ENCODE measurements at regions of chr3 and their contacts with region 1.

Region 1: DNA sequence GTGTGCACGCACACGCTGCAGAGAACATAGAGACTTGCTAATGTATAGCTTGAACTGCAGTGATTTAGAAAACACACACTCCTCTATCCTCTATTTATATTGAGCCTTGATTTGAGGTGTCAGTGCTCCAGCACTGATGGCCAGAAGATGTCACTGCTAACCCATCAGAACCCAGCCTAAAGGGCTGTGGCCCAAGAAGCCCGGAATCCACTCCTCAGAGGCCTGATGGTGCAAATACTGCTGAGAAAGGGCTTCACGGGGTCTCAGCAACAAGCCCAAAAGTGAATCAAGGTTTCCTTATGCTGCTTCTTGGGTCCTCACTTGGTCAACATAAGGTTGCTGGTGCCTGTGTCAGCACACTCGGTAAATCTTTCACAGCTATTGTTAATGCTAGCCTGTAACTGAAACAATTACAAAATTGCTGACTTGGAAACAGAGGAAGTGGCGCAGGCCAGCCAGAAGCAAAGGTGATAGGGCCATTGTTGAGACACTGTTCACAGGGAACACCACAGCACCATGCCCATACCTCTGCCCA is 60.3 kb downstream of the HEG1 start:
- DNase-seq: peak; percentile 69
- ATAC-seq: peak; percentile 89
- H3K4me3 Mint-ChIP-seq: no peak overlapping the region
- H3K27ac Mint-ChIP-seq: no peak overlapping the region
- H3K4me1 Mint-ChIP-seq: peaks cover 45% of the 10 kb centered on the region
- H3K27me3 Mint-ChIP-seq: no peaks in the 10 kb centered on the region
- CTCF ChIP-seq: peak; percentile 18; the same call in 1 of the 2 replicates

Region 2: GRCh38 chr3:124700880-124701684 is 294.4 kb before region 1 on chr3:
- CTCF ChIA-PET with region 1: no interaction called
- POLR2A ChIA-PET with region 1: no interaction called
- DNase-seq: peak; percentile 18
- ATAC-seq: peak; percentile 92
- H3K4me3 Mint-ChIP-seq: no peak overlapping the region
- H3K27ac Mint-ChIP-seq: peak overlapping the region; percentile 33; the same call in 1 of the 2 replicates
- H3K4me1 Mint-ChIP-seq: peaks cover 13% of the 10 kb centered on the region
- H3K27me3 Mint-ChIP-seq: no peaks in the 10 kb centered on the region; the same call in 1 of the 2 replicates
- CTCF ChIP-seq: no peak

Region 3: GRCh38 chr3:124962403-124962940 is 33.1 kb before region 1 on chr3:
- CTCF ChIA-PET with region 1: no interaction called
- POLR2A ChIA-PET with region 1: no interaction called
- DNase-seq: no peak
- ATAC-seq: no peak
- H3K4me3 Mint-ChIP-seq: no peak overlapping the region
- H3K27ac Mint-ChIP-seq: no peak overlapping the region
- H3K4me1 Mint-ChIP-seq: peaks cover 6% of the 10 kb centered on the region; the same call in 1 of the 2 replicates
- H3K27me3 Mint-ChIP-seq: no peaks in the 10 kb centered on the region
- CTCF ChIP-seq: no peak

Region 4: GRCh38 chr3:124976383-124976782 is 19.1 kb before region 1 on chr3:
- CTCF ChIA-PET with region 1: no interaction called
- POLR2A ChIA-PET with region 1: no interaction called
- DNase-seq: no peak
- ATAC-seq: no peak
- H3K4me3 Mint-ChIP-seq: no peak overlapping the region
- H3K27ac Mint-ChIP-seq: no peak overlapping the region
- H3K4me1 Mint-ChIP-seq: no peaks in the 10 kb centered on the region
- H3K27me3 Mint-ChIP-seq: no peaks in the 10 kb centered on the region
- CTCF ChIP-seq: no peak

Region 5: GRCh38 chr3:125087768-125088391 is 92.4 kb after region 1 on chr3:
- CTCF ChIA-PET with region 1: no interaction called
- POLR2A ChIA-PET with region 1: no interaction called
- DNase-seq: no peak
- ATAC-seq: no peak
- H3K4me3 Mint-ChIP-seq: no peak overlapping the region
- H3K27ac Mint-ChIP-seq: no peak overlapping the region
- H3K4me1 Mint-ChIP-seq: no peaks in the 10 kb centered on the region
- H3K27me3 Mint-ChIP-seq: no peaks in the 10 kb centered on the region
- CTCF ChIP-seq: no peak

Region 6: DNA sequence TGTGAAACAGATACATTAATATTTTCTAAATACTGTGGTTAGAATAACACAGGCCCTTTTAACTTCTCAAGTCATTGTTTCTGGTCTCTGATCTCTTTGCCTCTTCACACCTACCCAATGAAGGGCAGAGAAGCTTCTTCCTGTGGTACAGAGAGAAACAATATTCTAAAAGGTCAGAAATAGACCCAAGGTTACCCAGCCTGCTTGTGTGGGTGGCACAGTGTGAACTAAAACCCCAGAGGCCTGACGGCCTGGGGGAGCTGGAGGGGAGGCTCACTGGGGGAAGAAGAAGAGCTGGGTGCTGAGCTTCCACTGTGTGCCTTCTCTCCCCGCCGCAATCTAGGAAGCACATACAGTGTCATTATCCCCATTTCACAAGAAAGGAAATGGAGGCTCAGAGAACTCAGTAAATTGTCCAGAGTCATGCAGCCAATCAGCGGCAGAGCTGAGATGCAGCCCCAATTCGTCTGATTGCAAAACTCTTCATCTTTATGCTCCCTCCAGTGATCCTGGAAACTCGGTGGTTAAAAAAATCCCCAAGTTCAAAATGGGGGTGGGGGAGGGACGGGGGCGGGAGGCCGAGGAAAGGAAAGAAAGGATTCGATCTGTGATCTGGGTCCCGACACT is 124.3 kb after region 1 on chr3:
- CTCF ChIA-PET with region 1: interaction called, 10 read pairs
- POLR2A ChIA-PET with region 1: no interaction called
- DNase-seq: no peak
- ATAC-seq: no peak
- H3K4me3 Mint-ChIP-seq: peak overlapping the region; percentile 74
- H3K27ac Mint-ChIP-seq: 0 out of 2 replicates have a peak overlapping the region, but pooled peaks have one; percentile 57
- H3K4me1 Mint-ChIP-seq: peaks cover 62% of the 10 kb centered on the region
- H3K27me3 Mint-ChIP-seq: peaks cover 11% of the 10 kb centered on the region
- CTCF ChIP-seq: no peak

Region 7: GRCh38 chr3:125165189-125165947 is 169.8 kb after region 1 on chr3:
- CTCF ChIA-PET with region 1: interaction called, 11 read pairs
- POLR2A ChIA-PET with region 1: interaction called, 3 read pairs
- DNase-seq: peak; percentile 65
- ATAC-seq: peak; percentile 87
- H3K4me3 Mint-ChIP-seq: no peak overlapping the region
- H3K27ac Mint-ChIP-seq: no peak overlapping the region; the same call in 1 of the 2 replicates
- H3K4me1 Mint-ChIP-seq: peaks cover 11% of the 10 kb centered on the region
- H3K27me3 Mint-ChIP-seq: no peaks in the 10 kb centered on the region
- CTCF ChIP-seq: peak; percentile 32; the same call in 1 of the 2 replicates